ENCODE measurements at regions of chr17 and their contacts with region 1.

Region 1: GRCh38 chr17:75412455-75413317 is 7.2 kb upstream of the GRB2 start:
- DNase-seq: peak; percentile 79
- CTCF ChIP-seq: peak; percentile 72

Region 2: DNA sequence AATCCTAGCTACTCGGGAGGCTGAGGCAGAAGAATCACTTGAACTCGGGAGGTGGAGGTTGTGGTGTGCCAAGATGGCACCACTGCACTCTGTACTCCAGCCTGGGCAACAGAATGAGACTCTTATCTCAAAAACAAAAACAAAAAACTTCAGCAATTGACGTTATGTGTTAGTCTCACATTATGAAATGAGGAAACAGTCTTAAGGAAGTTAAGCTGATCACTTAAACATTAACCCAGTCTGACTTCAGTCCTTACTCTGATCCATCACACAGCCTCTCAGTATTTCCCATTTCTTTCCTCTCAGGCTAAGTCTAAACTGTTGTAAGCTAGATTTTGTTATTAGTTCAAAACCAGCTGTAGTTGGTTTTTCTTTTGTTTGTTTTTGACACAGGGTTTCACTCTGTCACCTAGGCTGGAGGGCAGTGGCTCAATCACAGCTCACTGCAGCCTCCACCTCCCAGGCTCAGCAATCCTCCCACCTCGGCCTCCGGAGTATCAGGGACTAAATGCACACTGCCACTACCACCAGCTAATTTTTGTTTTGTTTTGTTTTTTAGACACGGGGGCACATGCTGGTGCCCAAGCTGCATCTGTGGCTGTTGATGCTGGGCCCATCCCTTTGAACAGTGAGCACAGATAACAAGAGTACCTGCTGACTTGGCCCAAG is 264.7 kb before region 1 on chr17:
- in situ Hi-C with region 1: no loop called
- DNase-seq: no peak
- CTCF ChIP-seq: no peak

Region 3: GRCh38 chr17:75260641-75261335 is 151.9 kb before region 1 on chr17:
- in situ Hi-C with region 1: no loop called
- DNase-seq: no peak
- CTCF ChIP-seq: no peak

Region 4: DNA sequence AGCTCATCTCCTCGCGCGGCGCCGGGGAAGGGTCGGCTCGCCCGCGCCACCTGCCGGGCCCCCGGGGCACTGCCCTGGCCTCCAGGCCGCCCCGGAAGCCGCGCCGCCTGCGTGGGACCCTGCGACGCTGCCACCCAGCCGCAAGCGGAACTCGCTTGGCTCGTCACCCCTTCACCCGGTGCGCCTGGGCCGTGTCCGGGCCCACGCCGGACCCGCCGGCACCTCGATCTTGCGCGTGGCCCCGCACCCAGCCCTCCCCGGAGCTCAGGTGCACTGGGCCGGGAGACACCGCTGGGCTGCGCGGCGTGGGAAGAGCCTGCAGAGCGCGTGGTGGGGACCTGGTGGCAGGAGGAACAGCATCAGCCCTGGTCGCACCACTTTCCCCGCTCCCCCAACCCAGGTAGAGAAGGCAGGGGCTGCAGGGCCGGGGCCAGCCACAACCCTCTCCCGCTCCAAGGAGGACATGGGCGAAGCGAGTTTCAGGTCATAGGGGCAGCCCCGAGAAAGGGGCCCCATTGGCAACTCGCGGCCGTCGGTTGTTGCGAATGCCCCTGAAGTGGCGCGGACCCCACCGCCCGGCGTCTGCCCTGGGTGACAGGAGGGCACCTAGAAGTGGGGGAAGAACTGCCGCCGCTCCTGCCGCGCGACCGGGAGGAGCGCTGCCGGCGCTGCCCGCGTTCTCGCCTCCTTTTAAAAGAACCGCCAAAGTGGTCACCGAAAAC is 141.3 kb before region 1 on chr17:
- in situ Hi-C with region 1: loop called (anchors 5 kb)
- DNase-seq: peak; percentile 97
- CTCF ChIP-seq: peak; percentile 98

Region 5: DNA sequence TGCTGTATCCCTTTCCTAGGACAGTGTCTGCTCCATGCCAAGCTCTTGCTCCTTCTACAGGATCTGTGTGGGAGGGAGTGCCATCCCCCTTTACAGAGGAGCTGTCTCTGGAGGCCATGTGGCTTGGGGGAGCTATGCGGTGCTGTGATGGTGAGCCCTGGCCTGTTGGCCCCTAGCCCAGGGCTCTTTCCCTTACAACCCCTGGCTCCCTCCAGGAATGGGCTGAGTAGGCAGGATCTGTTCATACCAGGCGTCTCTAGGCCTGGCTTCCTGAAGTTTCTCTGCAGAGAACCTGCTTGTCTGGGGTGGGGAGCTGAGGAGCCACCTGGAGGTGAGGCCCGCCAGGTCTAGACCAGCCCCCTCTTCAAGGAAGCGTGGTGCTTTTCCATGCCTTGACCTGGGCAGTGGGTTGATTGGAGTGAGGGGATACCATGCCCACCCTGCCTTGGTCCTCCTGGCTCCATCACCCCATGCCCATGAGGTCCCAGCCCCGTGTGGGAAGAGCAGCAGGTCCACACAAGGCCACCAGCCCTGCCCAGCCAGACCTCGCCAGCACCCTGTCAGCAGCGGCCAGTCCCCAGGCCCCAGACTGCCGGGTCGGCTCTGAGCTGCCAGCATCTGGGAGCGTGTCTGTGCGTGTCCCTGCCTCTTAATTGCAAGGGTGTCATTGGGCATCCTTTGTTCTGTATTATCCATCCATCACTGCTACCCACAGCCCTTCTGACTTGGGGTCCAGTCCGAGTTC is 127.5 kb after region 1 on chr17:
- in situ Hi-C with region 1: no loop called
- DNase-seq: no peak
- CTCF ChIP-seq: no peak